Naive thymus-derived CD4-positive, alpha-beta T cell (primary cell): ENCODE measurements at regions of chr15 and their contacts with region 1.

Region 1: GRCh38 chr15:99704444-99704838 is 28.8 kb downstream of the LYSMD4 start:
- DNase-seq: peak in 7 of 9 donors; percentile 62 to 81 (median 76)
- ATAC-seq: peak; percentile 92
- H3K4me3 ChIP-seq: no peak overlapping the region
- H3K4me3 Mint-ChIP-seq: no peak overlapping the region
- H3K27ac ChIP-seq: no peak overlapping the region
- H3K27ac Mint-ChIP-seq: peak overlapping the region in 8 of 9 donors; percentile 4 to 91 (median 16)
- H3K4me1 ChIP-seq: peaks cover 0 to 43% of the 10 kb centered on the region in 2 donors
- H3K4me1 Mint-ChIP-seq: peaks cover 24 to 69% (median 54%) of the 10 kb centered on the region in 7 donors
- H3K27me3 ChIP-seq: no peaks in the 10 kb centered on the region
- H3K27me3 Mint-ChIP-seq: no peaks in the 10 kb centered on the region

Region 2: GRCh38 chr15:99213187-99213811 is 491.1 kb before region 1 on chr15:
- CTCF ChIA-PET with region 1: no interaction called
- POLR2A ChIA-PET with region 1: no interaction called
- intact Hi-C with region 1: loop called in 1 of 2 experiments (anchors 1 kb)
- DNase-seq: peak in 8 of 9 donors; percentile 11 to 54 (median 36)
- ATAC-seq: peak; percentile 69
- H3K4me3 ChIP-seq: no peak overlapping the region
- H3K4me3 Mint-ChIP-seq: no peak overlapping the region
- H3K27ac ChIP-seq: no peak overlapping the region
- H3K27ac Mint-ChIP-seq: no peak overlapping the region
- H3K4me1 ChIP-seq: no peaks in the 10 kb centered on the region
- H3K4me1 Mint-ChIP-seq: no peaks in the 10 kb centered on the region
- H3K27me3 ChIP-seq: no peaks in the 10 kb centered on the region
- H3K27me3 Mint-ChIP-seq: peaks cover 0 to 19% (median 6%) of the 10 kb centered on the region in 5 donors

Region 3: DNA sequence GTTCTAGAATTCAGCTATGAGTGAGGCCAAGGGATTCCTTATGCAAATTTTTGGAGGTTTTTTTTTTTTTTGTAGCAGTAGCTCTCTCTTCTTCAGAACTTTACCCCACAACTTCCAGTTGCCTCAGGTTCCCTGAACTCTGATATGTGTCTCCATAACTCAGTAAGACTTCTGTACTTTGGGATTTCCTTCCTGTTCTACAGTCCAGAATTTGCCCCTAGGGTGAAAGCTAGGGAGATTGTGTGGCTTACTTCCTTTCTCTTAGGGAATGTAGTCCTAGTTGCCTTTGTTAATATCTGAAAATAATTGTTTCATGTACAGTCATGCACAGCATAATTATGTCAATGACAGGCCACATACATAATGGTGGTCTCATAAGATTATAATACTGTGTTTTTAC is 422.3 kb before region 1 on chr15:
- CTCF ChIA-PET with region 1: interaction called, 23 read pairs
- POLR2A ChIA-PET with region 1: no interaction called
- intact Hi-C with region 1: loop called (anchors 1 kb)
- DNase-seq: no peak
- ATAC-seq: no peak
- H3K4me3 ChIP-seq: no peak overlapping the region
- H3K4me3 Mint-ChIP-seq: no peak overlapping the region
- H3K27ac ChIP-seq: no peak overlapping the region
- H3K27ac Mint-ChIP-seq: no peak overlapping the region
- H3K4me1 ChIP-seq: no peaks in the 10 kb centered on the region
- H3K4me1 Mint-ChIP-seq: peaks cover 9 to 47% (median 19%) of the 10 kb centered on the region in 7 donors
- H3K27me3 ChIP-seq: no peaks in the 10 kb centered on the region
- H3K27me3 Mint-ChIP-seq: no peaks in the 10 kb centered on the region

Region 4: GRCh38 chr15:99371180-99372103 is 333.0 kb before region 1 on chr15:
- CTCF ChIA-PET with region 1: interaction called, 12 read pairs
- POLR2A ChIA-PET with region 1: no interaction called
- intact Hi-C with region 1: no loop called
- DNase-seq: peak in 1 of 9 donors; percentile 4
- ATAC-seq: no peak
- H3K4me3 ChIP-seq: no peak overlapping the region
- H3K4me3 Mint-ChIP-seq: peak overlapping the region in 3 of 10 donors; percentile 5 to 43 (median 11)
- H3K27ac ChIP-seq: no peak overlapping the region
- H3K27ac Mint-ChIP-seq: peak overlapping the region in 8 of 9 donors; percentile 21 to 85 (median 54)
- H3K4me1 ChIP-seq: peaks cover 0 to 8% of the 10 kb centered on the region in 2 donors
- H3K4me1 Mint-ChIP-seq: peaks cover 8 to 18% (median 15%) of the 10 kb centered on the region in 7 donors
- H3K27me3 ChIP-seq: no peaks in the 10 kb centered on the region
- H3K27me3 Mint-ChIP-seq: no peaks in the 10 kb centered on the region

Region 5: GRCh38 chr15:99424978-99425656 is 279.3 kb before region 1 on chr15:
- CTCF ChIA-PET with region 1: interaction called, 5 read pairs
- POLR2A ChIA-PET with region 1: interaction called, 3 read pairs
- intact Hi-C with region 1: loop called in 1 of 2 experiments (anchors 5 kb)
- DNase-seq: peak in 7 of 9 donors; percentile 33 to 63 (median 39)
- ATAC-seq: peak; percentile 79
- H3K4me3 ChIP-seq: peak overlapping the region; percentile 0
- H3K4me3 Mint-ChIP-seq: peak overlapping the region; percentile 65 to 91 (median 82)
- H3K27ac ChIP-seq: peak overlapping the region; percentile 72
- H3K27ac Mint-ChIP-seq: peak overlapping the region; percentile 89 to 98 (median 97)
- H3K4me1 ChIP-seq: peaks cover 0 to 60% of the 10 kb centered on the region in 2 donors
- H3K4me1 Mint-ChIP-seq: peaks cover 22 to 82% (median 75%) of the 10 kb centered on the region in 7 donors
- H3K27me3 ChIP-seq: no peaks in the 10 kb centered on the region
- H3K27me3 Mint-ChIP-seq: no peaks in the 10 kb centered on the region

Region 6: DNA sequence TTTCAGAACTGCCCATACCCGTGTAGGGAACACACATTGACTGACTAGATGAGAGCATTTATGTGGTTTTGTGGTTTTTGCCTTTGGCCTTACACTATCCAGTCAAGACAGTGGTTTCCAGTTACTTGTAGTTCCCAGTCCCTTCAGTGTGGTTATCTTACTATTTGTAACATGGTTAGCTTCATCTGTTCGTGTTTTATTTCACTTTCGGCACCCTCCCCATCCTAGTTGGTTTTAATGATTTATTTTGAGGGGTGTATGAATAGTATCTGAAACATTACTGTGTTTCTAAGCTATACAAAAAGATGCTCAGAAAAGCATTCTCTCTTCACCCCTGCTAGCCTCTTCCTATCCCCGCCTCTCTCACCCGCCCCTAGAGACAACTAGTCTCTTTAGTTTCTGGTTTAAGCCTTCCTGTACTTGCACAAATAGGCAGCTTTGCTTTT is 14.7 kb after region 1 on chr15:
- CTCF ChIA-PET with region 1: interaction called, 10 read pairs
- POLR2A ChIA-PET with region 1: interaction called, 3 read pairs
- intact Hi-C with region 1: loop called (anchors 1 kb)
- DNase-seq: no peak
- ATAC-seq: peak; percentile 21
- H3K4me3 ChIP-seq: no peak overlapping the region
- H3K4me3 Mint-ChIP-seq: peak overlapping the region in 4 of 10 donors; percentile 17 to 77 (median 48)
- H3K27ac ChIP-seq: no peak overlapping the region
- H3K27ac Mint-ChIP-seq: peak overlapping the region in 4 of 9 donors; percentile 10 to 90 (median 54)
- H3K4me1 ChIP-seq: peaks cover 7 to 25% of the 10 kb centered on the region in 2 donors
- H3K4me1 Mint-ChIP-seq: peaks cover 23 to 42% (median 34%) of the 10 kb centered on the region in 7 donors
- H3K27me3 ChIP-seq: no peaks in the 10 kb centered on the region
- H3K27me3 Mint-ChIP-seq: no peaks in the 10 kb centered on the region

Region 7: GRCh38 chr15:99755692-99756409 is 51.4 kb after region 1 on chr15:
- CTCF ChIA-PET with region 1: interaction called, 11 read pairs
- POLR2A ChIA-PET with region 1: no interaction called
- intact Hi-C with region 1: loop called (anchors 1 kb)
- DNase-seq: peak in 8 of 9 donors; percentile 29 to 72 (median 62)
- ATAC-seq: peak; percentile 86
- H3K4me3 ChIP-seq: no peak overlapping the region
- H3K4me3 Mint-ChIP-seq: no peak overlapping the region
- H3K27ac ChIP-seq: no peak overlapping the region
- H3K27ac Mint-ChIP-seq: peak overlapping the region in 1 of 9 donors; percentile 10
- H3K4me1 ChIP-seq: no peaks in the 10 kb centered on the region
- H3K4me1 Mint-ChIP-seq: peaks cover 0 to 4% (median 0%) of the 10 kb centered on the region in 7 donors
- H3K27me3 ChIP-seq: no peaks in the 10 kb centered on the region
- H3K27me3 Mint-ChIP-seq: peaks cover 0 to 5% (median 0%) of the 10 kb centered on the region in 5 donors